Endothelial cell of umbilical vein (primary cell): ENCODE measurements at regions of chr3 and their contacts with region 1.

Region 1: GRCh38 chr3:12810013-12810780 is 13.7 kb downstream of the CAND2 start:
- DNase-seq: peak; percentile 95
- H3K4me3 ChIP-seq: peak overlapping the region; percentile 40 to 53 (median 46)
- H3K27ac ChIP-seq: no peak overlapping the region
- H3K4me1 ChIP-seq: peaks cover 8% of the 10 kb centered on the region
- H3K27me3 ChIP-seq: no peaks in the 10 kb centered on the region
- CTCF ChIP-seq: peak; percentile 81 to 85
- POLR2A ChIP-seq: no peak

Region 2: GRCh38 chr3:12663936-12664908 is 146.0 kb before region 1 on chr3 and contains the start of gene RAF1:
- CTCF ChIA-PET with region 1: no interaction called
- POLR2A ChIA-PET with region 1: interaction called, 10 read pairs
- dilution Hi-C with region 1: no loop called
- intact Hi-C with region 1: no loop called
- DNase-seq: peak; percentile 99
- H3K4me3 ChIP-seq: peak within 1 kb of the TSS; percentile 84 to 99 (median 96)
- H3K27ac ChIP-seq: peak within 1 kb of the TSS; percentile 87
- H3K4me1 ChIP-seq: peaks cover 13% of the 10 kb centered on the region
- H3K27me3 ChIP-seq: no peaks in the 10 kb centered on the region
- CTCF ChIP-seq: no peak
- POLR2A ChIP-seq: peak; percentile 97
- total RNA-seq, gene RAF1: 73.8 and 86.1 TPM in 2 replicates

Region 3: DNA sequence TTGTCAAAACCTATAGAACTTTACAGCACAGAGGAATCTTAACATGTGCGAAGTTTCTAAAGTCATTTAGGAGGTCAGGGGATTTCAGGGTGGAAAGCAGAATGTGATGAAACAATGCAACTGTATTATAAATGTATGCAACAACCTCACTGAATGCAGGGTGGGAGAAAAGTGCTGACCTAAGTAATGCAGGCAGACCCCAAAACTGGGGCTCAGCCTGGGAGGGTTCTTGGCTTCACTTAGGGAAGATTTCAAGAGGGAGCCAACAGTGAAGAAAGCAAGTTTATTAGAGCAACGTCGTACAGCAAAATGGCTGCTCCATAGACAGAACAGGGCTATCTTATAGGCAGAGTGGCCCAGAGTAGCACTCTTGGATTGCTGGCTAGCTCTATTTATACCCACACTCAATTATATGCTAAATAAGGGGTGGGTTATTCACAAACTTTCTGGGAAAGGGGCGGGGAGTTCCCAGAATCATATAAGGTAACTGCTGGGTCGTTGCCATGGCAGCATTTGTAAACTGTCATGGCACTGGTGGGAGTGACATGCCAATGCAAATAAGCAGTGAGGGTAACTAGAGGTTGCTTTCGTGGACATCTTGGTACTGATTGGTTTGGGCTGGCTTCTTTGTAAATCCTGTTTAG is 27.9 kb before region 1 on chr3:
- CTCF ChIA-PET with region 1: interaction called, 27 read pairs
- POLR2A ChIA-PET with region 1: no interaction called
- dilution Hi-C with region 1: no loop called
- intact Hi-C with region 1: no loop called
- DNase-seq: no peak
- H3K4me3 ChIP-seq: no peak overlapping the region
- H3K27ac ChIP-seq: no peak overlapping the region
- H3K4me1 ChIP-seq: no peaks in the 10 kb centered on the region
- H3K27me3 ChIP-seq: peaks cover 3 to 8% of the 10 kb centered on the region in 2 experiments
- CTCF ChIP-seq: no peak
- POLR2A ChIP-seq: no peak

Region 4: DNA sequence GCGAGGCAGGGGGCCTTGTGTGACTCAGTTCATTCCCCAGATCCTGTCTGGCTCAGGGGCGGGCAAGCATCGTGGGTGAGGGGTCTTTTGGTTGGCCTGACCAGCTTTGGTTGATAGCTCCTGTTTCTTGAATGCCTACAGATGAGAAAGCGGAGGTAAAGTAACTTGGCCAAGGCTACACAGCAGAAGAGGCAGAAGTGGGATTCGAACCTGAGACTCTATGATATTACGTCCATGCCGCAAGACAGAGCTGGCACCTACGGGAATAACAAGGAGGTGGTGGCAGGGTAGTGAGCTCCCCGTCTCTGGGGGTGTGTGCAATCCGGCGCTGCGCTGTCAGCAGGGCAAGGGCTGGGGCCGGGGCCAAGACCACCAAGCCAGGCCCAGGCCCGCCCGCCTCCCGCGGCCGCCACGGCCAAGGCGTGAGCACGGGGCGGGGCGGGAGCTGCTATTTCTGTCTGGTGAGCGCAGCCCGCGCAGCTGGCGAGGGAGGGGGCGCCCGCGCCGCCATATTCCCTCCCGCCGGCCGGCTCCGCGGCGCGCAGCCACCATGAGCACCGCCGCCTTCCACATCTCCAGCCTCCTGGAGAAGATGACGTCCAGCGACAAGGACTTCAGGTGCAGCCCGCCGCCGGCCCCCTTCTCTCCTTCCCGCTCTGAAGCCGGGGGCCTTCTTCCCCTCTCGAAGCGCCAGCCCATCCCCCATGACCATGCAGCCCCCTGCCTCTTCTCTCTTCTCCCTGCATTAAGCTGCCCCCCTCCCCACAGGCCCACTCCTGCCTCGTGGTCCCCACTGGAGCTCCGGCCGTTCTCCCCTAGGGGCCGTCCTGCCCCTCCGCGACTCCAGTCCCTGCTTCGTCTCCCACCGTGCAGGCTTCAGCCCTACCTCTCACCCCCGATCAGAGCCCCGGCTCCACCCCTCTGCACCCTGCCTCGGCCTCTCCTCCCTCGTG is 13.8 kb before region 1 on chr3 and contains the start of gene CAND2:
- CTCF ChIA-PET with region 1: interaction called, 30 read pairs
- POLR2A ChIA-PET with region 1: interaction called, 6 read pairs
- dilution Hi-C with region 1: no loop called
- intact Hi-C with region 1: loop called (anchors 1 kb)
- DNase-seq: peak; percentile 51
- H3K4me3 ChIP-seq: peak within 1 kb of the TSS; percentile 51 to 66 (median 65)
- H3K27ac ChIP-seq: no peak within 1 kb of the TSS
- H3K4me1 ChIP-seq: peaks cover 5% of the 10 kb centered on the region
- H3K27me3 ChIP-seq: no peaks in the 10 kb centered on the region
- CTCF ChIP-seq: no peak
- POLR2A ChIP-seq: no peak
- total RNA-seq, gene CAND2: 11.0 and 12.4 TPM in 2 replicates

Region 5: GRCh38 chr3:12822725-12823373 is 12.7 kb after region 1 on chr3:
- CTCF ChIA-PET with region 1: interaction called, 13 read pairs
- POLR2A ChIA-PET with region 1: interaction called, 4 read pairs
- dilution Hi-C with region 1: no loop called
- intact Hi-C with region 1: no loop called
- DNase-seq: no peak
- H3K4me3 ChIP-seq: no peak overlapping the region
- H3K27ac ChIP-seq: no peak overlapping the region
- H3K4me1 ChIP-seq: no peaks in the 10 kb centered on the region
- H3K27me3 ChIP-seq: no peaks in the 10 kb centered on the region
- CTCF ChIP-seq: peak in 1 of 2 donors; percentile 8
- POLR2A ChIP-seq: no peak

Region 6: DNA sequence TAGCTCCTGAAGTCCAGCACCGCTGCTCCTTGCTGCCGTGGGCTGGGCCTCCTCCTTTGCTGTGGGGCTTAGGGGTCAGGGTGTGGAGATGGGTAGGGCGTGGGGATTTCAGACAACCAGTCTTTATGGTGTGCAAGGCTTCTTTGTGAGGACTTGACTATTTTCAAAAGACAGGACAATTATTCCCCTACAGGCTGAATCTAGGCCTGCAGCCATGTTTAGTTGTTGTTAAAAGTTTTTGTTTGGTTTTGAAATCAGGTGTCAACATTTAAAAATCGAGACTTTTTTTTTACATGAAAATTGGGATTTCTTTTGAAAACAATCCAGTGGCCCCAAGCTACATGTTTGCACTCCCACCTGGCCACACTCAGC is 20.6 kb after region 1 on chr3:
- CTCF ChIA-PET with region 1: interaction called, 7 read pairs
- POLR2A ChIA-PET with region 1: interaction called, 4 read pairs
- dilution Hi-C with region 1: no loop called
- intact Hi-C with region 1: loop called (anchors 2 kb)
- DNase-seq: no peak
- H3K4me3 ChIP-seq: no peak overlapping the region
- H3K27ac ChIP-seq: no peak overlapping the region
- H3K4me1 ChIP-seq: peaks cover 7% of the 10 kb centered on the region
- H3K27me3 ChIP-seq: no peaks in the 10 kb centered on the region
- CTCF ChIP-seq: peak in 1 of 2 donors; percentile 9
- POLR2A ChIP-seq: no peak

Region 7: DNA sequence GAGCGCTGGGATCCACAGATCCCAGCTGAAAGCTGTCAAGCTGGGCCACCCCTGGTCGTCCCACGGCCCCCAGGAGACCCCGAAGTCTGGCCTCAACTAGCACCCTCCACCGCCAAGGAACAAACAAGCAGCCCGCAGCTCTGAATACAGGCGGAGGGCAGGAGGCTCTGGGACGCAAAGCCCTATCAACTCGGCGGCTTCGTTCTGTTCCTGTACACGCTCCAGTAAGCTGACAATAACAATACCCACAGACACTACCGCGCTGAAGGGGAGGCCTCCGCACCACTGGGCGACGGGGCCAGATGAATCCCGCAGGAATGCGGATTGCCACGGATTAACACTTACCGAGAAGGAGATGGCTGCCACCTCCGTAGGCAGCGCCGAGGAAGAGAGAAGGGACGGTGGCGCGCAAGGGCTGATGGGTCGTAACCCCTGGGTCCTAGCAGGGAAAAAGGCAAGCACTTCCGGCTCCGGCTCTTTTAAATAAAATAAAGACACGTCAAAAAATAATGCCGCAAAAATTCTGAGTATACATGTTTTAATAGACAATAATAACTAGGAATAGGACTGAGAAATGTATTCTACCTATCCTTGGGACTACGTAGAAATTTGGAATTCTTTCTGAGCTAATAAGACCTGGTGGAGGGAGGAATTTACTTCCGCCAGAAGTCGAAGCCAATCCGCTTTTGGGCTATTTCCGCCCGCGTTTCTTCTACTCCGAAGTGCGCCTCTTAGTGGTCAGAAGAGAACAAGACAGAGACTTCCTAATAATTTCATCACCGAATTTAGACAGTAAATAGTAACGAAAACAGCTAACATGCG is 31.2 kb after region 1 on chr3 and contains the start of gene RPL32:
- CTCF ChIA-PET with region 1: interaction called, 9 read pairs
- POLR2A ChIA-PET with region 1: interaction called, 9 read pairs
- dilution Hi-C with region 1: no loop called
- intact Hi-C with region 1: loop called (anchors 1 kb)
- DNase-seq: peak; percentile 97
- H3K4me3 ChIP-seq: peak within 1 kb of the TSS; percentile 88 to 98 (median 91)
- H3K27ac ChIP-seq: peak within 1 kb of the TSS; percentile 95
- H3K4me1 ChIP-seq: peaks cover 26% of the 10 kb centered on the region
- H3K27me3 ChIP-seq: no peaks in the 10 kb centered on the region
- CTCF ChIP-seq: peak; percentile 74 to 87
- POLR2A ChIP-seq: peak; percentile 98
- total RNA-seq, gene RPL32: 1,569 and 1,588 TPM in 2 replicates

Region 8: DNA sequence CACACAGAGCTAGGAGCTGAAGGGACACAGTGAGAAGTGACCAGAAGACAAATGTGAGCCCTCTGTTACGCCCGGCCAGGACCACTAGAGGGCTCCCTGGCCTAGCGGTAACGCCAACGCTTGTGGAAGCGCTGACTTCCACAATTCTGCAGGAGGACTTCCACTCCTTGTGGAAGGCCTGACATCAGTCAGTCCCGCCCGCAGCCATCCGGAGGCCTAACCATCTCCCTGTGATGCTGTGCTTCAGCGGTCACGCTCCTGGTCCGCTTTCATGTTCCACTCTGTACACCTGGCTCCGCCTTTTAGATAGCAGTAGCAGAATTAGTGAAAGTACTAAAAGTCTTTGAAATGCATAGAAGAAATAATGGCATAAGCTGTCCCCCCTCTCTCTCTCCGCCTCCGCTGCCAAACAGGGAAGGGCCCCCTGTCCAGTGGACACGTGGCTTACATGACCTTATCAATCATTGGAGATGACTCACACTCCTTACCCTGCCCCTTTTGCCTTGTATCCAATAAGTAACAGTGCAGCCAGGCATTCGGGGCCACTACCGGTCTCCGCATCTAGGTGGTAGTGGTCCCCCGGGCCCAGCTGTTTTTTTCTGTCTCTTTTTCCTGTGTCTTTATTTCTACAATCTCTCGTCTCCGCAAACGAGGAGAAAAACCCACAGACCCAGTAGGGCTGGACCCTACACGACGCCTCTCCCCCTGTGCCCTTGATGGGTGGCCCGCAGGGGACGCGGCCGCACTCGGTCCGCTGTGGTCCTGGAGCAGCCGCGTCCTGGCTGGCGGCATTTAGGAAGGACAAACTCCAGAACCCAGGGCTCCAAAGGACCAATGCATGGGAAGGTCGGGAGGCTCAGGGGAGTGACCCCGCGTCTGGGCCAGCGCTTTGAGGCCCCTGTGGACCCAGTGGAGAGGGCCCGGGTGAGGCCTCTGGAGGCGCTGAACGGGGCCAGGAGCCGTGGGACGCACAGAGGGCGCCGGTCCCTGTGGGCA is 58.1 kb after region 1 on chr3:
- CTCF ChIA-PET with region 1: no interaction called
- POLR2A ChIA-PET with region 1: no interaction called
- dilution Hi-C with region 1: no loop called
- intact Hi-C with region 1: no loop called
- DNase-seq: peak; percentile 83
- H3K4me3 ChIP-seq: peak overlapping the region in 1 of 3 experiments; percentile 4
- H3K27ac ChIP-seq: no peak overlapping the region
- H3K4me1 ChIP-seq: no peaks in the 10 kb centered on the region
- H3K27me3 ChIP-seq: no peaks in the 10 kb centered on the region
- CTCF ChIP-seq: peak; percentile 72 to 90
- POLR2A ChIP-seq: no peak